ENCODE measurements at regions of chr12 and their contacts with region 1.

Region 1: DNA sequence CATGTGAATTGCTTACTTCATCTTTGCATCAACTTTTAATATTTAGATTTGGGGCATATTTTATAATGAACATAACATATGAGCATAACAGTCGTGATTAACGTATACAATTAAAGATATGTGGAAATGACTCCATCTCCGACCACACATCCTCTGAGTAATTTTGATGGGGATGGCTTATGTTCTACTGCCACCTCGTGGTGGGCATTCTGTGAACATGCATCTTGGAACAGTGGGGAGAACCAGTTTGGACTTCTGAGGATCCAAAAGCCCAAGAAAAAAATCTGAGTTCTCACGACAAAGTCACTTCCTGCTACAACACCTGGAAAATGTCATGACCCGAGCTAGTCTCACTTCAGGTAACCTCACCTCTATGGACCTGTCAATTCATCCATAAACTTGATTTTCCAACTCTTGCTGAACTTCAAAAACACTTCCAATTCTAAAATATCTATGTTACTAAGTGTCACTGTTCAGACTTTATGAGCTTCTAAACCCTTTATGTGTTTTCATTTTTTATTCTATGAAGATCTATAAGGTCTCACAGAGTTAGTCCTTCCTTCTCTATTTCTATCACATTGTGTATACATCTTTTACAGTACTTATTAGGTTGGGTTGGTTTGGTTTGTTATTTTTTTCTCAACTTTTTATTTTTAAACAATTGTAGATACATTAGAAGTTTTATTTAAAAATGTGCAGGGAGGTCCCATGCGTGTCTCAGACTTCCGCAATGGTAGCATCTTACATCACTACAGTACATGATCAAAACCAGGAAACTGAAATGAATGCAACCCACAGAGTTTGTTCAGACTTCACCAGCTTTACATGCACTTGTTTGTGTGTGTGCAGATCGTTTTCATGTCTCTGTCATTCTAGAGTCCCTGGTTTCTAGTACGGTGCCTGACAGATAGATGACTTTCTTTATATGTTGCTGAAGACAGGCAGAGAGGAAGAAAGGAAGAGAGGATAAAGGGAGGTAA is 38.2 kb upstream of the STAB2 start:
- DNase-seq: peak; percentile 73 to 87 (median 80)
- H3K4me3 ChIP-seq: no peak overlapping the region
- H3K27ac ChIP-seq: no peak overlapping the region
- H3K4me1 ChIP-seq: no peaks in the 10 kb centered on the region
- H3K27me3 ChIP-seq: peaks cover 3 to 16% (median 7%) of the 10 kb centered on the region in 5 experiments

Region 2: GRCh38 chr12:102883204-102883799 is 665.6 kb before region 1 on chr12:
- CTCF ChIA-PET with region 1: interaction called, 54 read pairs
- POLR2A ChIA-PET with region 1: no interaction called
- DNase-seq: peak; percentile 9 to 39 (median 13)
- H3K4me3 ChIP-seq: no peak overlapping the region
- H3K27ac ChIP-seq: no peak overlapping the region
- H3K4me1 ChIP-seq: no peaks in the 10 kb centered on the region
- H3K27me3 ChIP-seq: peaks cover 0 to 10% (median 0%) of the 10 kb centered on the region in 5 experiments

Region 3: DNA sequence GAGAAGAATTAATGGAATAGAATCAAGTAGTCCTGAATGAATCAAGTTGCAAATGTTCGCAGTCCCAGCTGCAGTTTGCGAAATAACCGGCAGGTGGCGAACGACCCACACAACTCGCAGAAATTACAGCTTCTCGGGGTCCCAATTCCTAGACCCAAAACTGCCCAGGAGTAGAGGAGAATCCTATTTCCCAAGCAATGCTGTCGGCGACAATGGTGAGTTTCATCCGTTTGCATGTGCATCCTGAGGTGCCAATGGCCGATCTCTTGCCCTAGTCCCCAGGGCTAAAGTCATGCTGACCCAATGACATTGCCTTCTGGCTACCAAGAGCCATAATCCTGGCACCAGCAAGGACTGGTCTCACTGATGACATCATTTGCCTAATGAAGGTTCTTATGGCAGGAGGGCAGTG is 600.0 kb before region 1 on chr12:
- CTCF ChIA-PET with region 1: interaction called, 75 read pairs
- POLR2A ChIA-PET with region 1: no interaction called
- DNase-seq: peak; percentile 40 to 67 (median 50)
- H3K4me3 ChIP-seq: no peak overlapping the region
- H3K27ac ChIP-seq: no peak overlapping the region
- H3K4me1 ChIP-seq: no peaks in the 10 kb centered on the region
- H3K27me3 ChIP-seq: peaks cover 5 to 76% (median 45%) of the 10 kb centered on the region in 5 experiments

Region 4: DNA sequence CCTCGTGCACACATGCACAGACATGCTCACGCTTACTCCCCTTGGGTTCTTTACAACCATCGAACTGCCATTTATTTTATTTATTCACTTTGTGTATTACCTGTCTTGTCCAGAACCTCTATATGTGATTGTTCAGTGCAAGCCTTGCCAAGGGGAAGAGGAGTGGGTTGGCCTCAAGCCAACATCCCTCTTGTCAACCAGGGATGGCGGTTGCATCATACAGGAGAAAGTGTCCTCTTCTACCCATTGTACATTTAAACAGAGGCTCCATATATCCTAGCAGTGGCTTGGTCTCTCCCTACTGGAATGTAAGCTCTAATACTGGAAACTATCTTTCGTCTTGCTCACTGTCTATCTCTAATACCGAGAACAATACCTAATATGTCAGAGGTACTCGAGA is 161.5 kb before region 1 on chr12:
- CTCF ChIA-PET with region 1: no interaction called
- POLR2A ChIA-PET with region 1: no interaction called
- DNase-seq: no peak
- H3K4me3 ChIP-seq: no peak overlapping the region
- H3K27ac ChIP-seq: no peak overlapping the region
- H3K4me1 ChIP-seq: no peaks in the 10 kb centered on the region
- H3K27me3 ChIP-seq: no peaks in the 10 kb centered on the region

Region 5: DNA sequence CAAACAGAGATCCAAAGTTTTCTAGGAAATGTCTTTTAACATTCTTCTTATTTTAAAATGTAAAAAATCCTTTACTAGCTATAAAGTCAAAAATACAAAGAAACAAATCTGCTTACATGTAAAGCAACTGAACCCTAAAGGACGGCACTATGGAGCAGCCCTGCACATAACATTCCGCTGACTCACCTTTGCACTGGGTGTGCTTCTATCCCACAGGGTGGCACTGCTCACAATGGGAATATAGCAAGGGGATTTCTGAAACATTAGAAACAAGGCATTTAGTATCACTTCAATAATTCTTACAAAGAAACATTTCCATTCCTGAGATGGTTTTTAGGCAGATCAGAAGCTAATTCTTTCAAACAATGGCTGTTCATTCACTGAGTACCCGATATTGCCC is 147.5 kb before region 1 on chr12:
- CTCF ChIA-PET with region 1: interaction called, 19 read pairs
- POLR2A ChIA-PET with region 1: no interaction called
- DNase-seq: peak in 2 of 3 donors; percentile 31 to 32
- H3K4me3 ChIP-seq: no peak overlapping the region
- H3K27ac ChIP-seq: no peak overlapping the region
- H3K4me1 ChIP-seq: no peaks in the 10 kb centered on the region
- H3K27me3 ChIP-seq: peaks cover 0 to 6% (median 0%) of the 10 kb centered on the region in 5 experiments

Region 6: DNA sequence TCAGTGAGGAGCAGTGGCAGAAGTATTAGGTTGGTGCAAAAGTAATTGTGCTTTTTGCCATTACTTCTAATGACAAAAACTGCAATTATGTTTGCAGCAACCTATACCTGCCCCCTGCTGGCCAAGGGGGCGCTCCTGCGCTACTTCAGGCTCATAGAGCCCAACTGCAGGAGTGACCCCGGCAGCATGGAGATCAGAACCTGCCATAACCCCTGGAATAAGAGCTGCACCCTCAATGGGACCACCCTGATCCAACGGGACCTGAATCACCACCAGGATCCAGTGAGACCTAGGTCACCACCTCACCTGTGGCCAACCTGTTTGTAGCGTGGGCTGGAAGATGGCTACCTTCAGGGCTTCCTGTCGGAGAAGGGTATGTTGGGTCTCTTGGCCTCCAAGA is 44.9 kb before region 1 on chr12:
- CTCF ChIA-PET with region 1: interaction called, 12 read pairs
- POLR2A ChIA-PET with region 1: no interaction called
- DNase-seq: peak; percentile 45 to 71 (median 65)
- H3K4me3 ChIP-seq: no peak overlapping the region
- H3K27ac ChIP-seq: no peak overlapping the region
- H3K4me1 ChIP-seq: no peaks in the 10 kb centered on the region
- H3K27me3 ChIP-seq: peaks cover 0 to 4% (median 2%) of the 10 kb centered on the region in 5 experiments

Region 7: DNA sequence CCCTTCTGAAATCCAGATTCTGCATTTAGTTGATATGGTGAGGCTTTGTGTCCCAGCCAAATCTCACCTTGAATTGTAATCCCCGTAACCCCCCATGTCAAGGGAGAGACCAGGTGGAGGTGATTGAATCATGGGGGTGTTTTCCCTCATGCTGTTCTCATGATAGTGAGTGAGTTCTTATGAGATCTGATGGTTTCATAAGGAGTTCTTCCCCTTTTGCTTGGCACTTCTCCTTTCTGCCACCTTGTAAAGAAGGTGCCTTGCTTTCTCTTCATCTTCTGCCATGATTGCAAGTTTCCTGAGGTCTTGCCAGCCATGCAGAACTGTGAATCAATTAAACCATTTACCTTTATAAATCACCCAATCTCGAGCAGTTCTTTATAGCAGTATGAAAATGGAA is 30.0 kb before region 1 on chr12:
- CTCF ChIA-PET with region 1: no interaction called
- POLR2A ChIA-PET with region 1: no interaction called
- DNase-seq: peak in 2 of 3 donors; percentile 35 to 46
- H3K4me3 ChIP-seq: no peak overlapping the region
- H3K27ac ChIP-seq: no peak overlapping the region
- H3K4me1 ChIP-seq: no peaks in the 10 kb centered on the region
- H3K27me3 ChIP-seq: no peaks in the 10 kb centered on the region

Measured in common myeloid progenitor, CD34-positive (primary cell).